CD8-positive, alpha-beta memory T cell (primary cell): ENCODE measurements at regions of chr16 and their contacts with region 1.

Region 1: GRCh38 chr16:11715246-11715947 is 27.3 kb downstream of the TXNDC11 start:
- DNase-seq: no peak
- H3K4me3 ChIP-seq: no peak overlapping the region
- H3K4me3 Mint-ChIP-seq: no peak overlapping the region
- H3K27ac ChIP-seq: no peak overlapping the region
- H3K27ac Mint-ChIP-seq: peak overlapping the region in 2 of 8 donors; percentile 4 to 84
- H3K4me1 ChIP-seq: no peaks in the 10 kb centered on the region
- H3K4me1 Mint-ChIP-seq: peaks cover 11 to 31% (median 29%) of the 10 kb centered on the region in 3 donors
- H3K27me3 ChIP-seq: no peaks in the 10 kb centered on the region
- H3K27me3 Mint-ChIP-seq: peaks cover 0 to 2% of the 10 kb centered on the region in 2 donors

Region 2: GRCh38 chr16:11407047-11407982 is 308.1 kb before region 1 on chr16:
- CTCF ChIA-PET with region 1: interaction called, 26 read pairs
- POLR2A ChIA-PET with region 1: no interaction called
- DNase-seq: peak; percentile 35 to 69 (median 61)
- H3K4me3 ChIP-seq: no peak overlapping the region
- H3K4me3 Mint-ChIP-seq: no peak overlapping the region
- H3K27ac ChIP-seq: no peak overlapping the region
- H3K27ac Mint-ChIP-seq: peak overlapping the region in 1 of 8 donors; percentile 50
- H3K4me1 ChIP-seq: no peaks in the 10 kb centered on the region
- H3K4me1 Mint-ChIP-seq: peaks cover 0 to 3% (median 0%) of the 10 kb centered on the region in 3 donors
- H3K27me3 ChIP-seq: no peaks in the 10 kb centered on the region
- H3K27me3 Mint-ChIP-seq: peaks cover 0 to 3% of the 10 kb centered on the region in 2 donors

Region 3: DNA sequence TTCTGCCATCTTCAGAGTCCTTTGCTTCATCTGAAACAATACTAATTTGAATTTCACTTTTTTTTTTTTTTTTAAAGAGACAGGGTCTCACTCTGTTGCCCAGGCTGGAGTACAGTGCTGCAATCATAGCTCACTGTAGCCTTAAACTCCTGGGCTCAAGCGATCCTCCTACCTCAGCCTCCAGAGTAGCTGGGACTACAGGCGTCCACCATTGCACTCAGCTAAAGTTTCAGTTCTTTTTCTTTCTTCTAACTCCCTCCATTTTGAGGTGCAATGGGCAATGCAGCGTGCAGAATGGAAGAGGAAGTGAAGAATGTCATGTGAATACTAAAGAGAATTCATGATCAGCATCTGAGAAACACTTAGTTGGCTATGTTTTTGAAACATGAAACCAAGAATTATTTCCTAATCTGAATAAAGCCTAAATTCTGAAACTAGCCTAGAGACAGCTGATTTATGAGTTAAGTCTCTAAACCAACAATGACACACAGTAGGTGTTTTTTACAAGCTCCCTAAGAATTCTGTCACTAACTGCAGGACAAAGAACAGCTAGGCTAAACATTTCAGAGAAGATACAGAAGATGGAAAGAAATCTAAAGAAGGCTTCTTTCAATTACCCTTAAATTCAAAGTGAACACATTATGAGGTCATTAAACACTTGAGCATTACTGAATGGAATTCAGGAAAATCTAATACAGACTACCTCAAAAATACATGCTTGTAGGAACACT is 26.2 kb before region 1 on chr16:
- CTCF ChIA-PET with region 1: interaction called, 16 read pairs
- POLR2A ChIA-PET with region 1: no interaction called
- DNase-seq: no peak
- H3K4me3 ChIP-seq: no peak overlapping the region
- H3K4me3 Mint-ChIP-seq: no peak overlapping the region
- H3K27ac ChIP-seq: no peak overlapping the region
- H3K27ac Mint-ChIP-seq: peak overlapping the region in 6 of 8 donors; percentile 1 to 86 (median 40)
- H3K4me1 ChIP-seq: peaks cover 17% of the 10 kb centered on the region
- H3K4me1 Mint-ChIP-seq: peaks cover 8 to 22% (median 20%) of the 10 kb centered on the region in 3 donors
- H3K27me3 ChIP-seq: no peaks in the 10 kb centered on the region
- H3K27me3 Mint-ChIP-seq: no peaks in the 10 kb centered on the region

Region 4: DNA sequence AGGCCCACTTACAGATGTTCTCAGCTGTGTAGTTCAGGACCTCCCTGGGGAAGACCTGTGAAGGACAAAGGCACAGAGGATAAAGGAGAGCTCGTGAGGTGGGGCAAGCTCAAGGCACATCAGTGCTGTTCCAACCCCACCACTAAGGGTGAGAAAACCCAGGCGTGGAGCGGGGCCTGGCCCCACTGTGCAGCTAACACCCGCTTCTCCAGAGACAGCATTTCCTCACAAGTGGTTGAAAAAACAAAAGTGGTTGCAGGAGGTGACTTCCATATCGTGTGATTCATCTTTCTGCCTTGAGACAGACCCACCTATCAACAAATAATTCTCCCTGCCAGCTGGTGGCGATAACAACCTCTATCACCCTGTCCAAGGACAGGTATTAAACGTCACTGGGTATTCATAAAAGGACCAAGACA is 17.1 kb before region 1 on chr16:
- CTCF ChIA-PET with region 1: interaction called, 10 read pairs
- POLR2A ChIA-PET with region 1: no interaction called
- DNase-seq: peak in 1 of 5 donors; percentile 11
- H3K4me3 ChIP-seq: no peak overlapping the region
- H3K4me3 Mint-ChIP-seq: peak overlapping the region in 3 of 7 donors; percentile 10 to 34 (median 30)
- H3K27ac ChIP-seq: no peak overlapping the region
- H3K27ac Mint-ChIP-seq: peak overlapping the region in 6 of 8 donors; percentile 38 to 83 (median 69)
- H3K4me1 ChIP-seq: peaks cover 15% of the 10 kb centered on the region
- H3K4me1 Mint-ChIP-seq: peaks cover 43 to 56% (median 54%) of the 10 kb centered on the region in 3 donors
- H3K27me3 ChIP-seq: no peaks in the 10 kb centered on the region
- H3K27me3 Mint-ChIP-seq: no peaks in the 10 kb centered on the region

Region 5: GRCh38 chr16:11725457-11725856 is 10.1 kb after region 1 on chr16:
- CTCF ChIA-PET with region 1: interaction called, 10 read pairs
- POLR2A ChIA-PET with region 1: no interaction called
- DNase-seq: no peak
- H3K4me3 ChIP-seq: no peak overlapping the region
- H3K4me3 Mint-ChIP-seq: no peak overlapping the region
- H3K27ac ChIP-seq: no peak overlapping the region
- H3K27ac Mint-ChIP-seq: peak overlapping the region in 1 of 8 donors; percentile 42
- H3K4me1 ChIP-seq: peaks cover 8% of the 10 kb centered on the region
- H3K4me1 Mint-ChIP-seq: peaks cover 29 to 46% (median 41%) of the 10 kb centered on the region in 3 donors
- H3K27me3 ChIP-seq: no peaks in the 10 kb centered on the region
- H3K27me3 Mint-ChIP-seq: no peaks in the 10 kb centered on the region

Region 6: GRCh38 chr16:11768849-11769248 is 53.5 kb after region 1 on chr16:
- CTCF ChIA-PET with region 1: no interaction called
- POLR2A ChIA-PET with region 1: no interaction called
- DNase-seq: no peak
- H3K4me3 ChIP-seq: no peak overlapping the region
- H3K4me3 Mint-ChIP-seq: no peak overlapping the region
- H3K27ac ChIP-seq: no peak overlapping the region
- H3K27ac Mint-ChIP-seq: peak overlapping the region in 4 of 8 donors; percentile 7 to 82 (median 72)
- H3K4me1 ChIP-seq: no peaks in the 10 kb centered on the region
- H3K4me1 Mint-ChIP-seq: peaks cover 0 to 4% (median 0%) of the 10 kb centered on the region in 3 donors
- H3K27me3 ChIP-seq: no peaks in the 10 kb centered on the region
- H3K27me3 Mint-ChIP-seq: no peaks in the 10 kb centered on the region

Region 7: DNA sequence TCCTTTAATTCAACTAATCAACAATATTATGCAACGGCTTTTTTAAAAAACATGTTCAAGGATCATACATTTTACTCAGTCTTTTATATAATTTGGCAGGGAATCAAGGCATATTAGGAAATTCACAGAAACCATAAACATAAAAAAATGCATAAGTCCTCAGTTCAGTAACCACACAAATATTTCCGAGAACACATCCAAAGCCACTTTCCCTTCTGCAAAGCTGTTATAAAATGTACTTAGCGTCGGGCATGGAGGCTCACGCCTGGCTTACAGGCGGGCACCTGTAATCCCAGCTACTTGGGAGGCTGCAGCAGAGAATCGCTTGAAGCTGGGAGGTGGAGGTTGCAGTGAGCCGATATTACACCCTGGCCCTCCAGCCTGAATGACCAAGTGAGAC is 91.3 kb after region 1 on chr16:
- CTCF ChIA-PET with region 1: no interaction called
- POLR2A ChIA-PET with region 1: no interaction called
- DNase-seq: no peak
- H3K4me3 ChIP-seq: no peak overlapping the region
- H3K4me3 Mint-ChIP-seq: no peak overlapping the region
- H3K27ac ChIP-seq: no peak overlapping the region
- H3K27ac Mint-ChIP-seq: no peak overlapping the region
- H3K4me1 ChIP-seq: no peaks in the 10 kb centered on the region
- H3K4me1 Mint-ChIP-seq: peaks cover 2 to 11% (median 9%) of the 10 kb centered on the region in 3 donors
- H3K27me3 ChIP-seq: no peaks in the 10 kb centered on the region
- H3K27me3 Mint-ChIP-seq: peaks cover 4 to 6% of the 10 kb centered on the region in 2 donors